Calu3 (cell line): ENCODE measurements at regions of chr15 and their contacts with region 1.

Region 1: GRCh38 chr15:38647683-38648082 is 83.1 kb upstream of the RASGRP1 start:
- DNase-seq: peak; percentile 28
- H3K4me3 Mint-ChIP-seq: no peak overlapping the region
- H3K27ac Mint-ChIP-seq: no peak overlapping the region
- H3K4me1 Mint-ChIP-seq: no peaks in the 10 kb centered on the region
- H3K27me3 Mint-ChIP-seq: no peaks in the 10 kb centered on the region
- CTCF ChIP-seq: no peak

Region 2: DNA sequence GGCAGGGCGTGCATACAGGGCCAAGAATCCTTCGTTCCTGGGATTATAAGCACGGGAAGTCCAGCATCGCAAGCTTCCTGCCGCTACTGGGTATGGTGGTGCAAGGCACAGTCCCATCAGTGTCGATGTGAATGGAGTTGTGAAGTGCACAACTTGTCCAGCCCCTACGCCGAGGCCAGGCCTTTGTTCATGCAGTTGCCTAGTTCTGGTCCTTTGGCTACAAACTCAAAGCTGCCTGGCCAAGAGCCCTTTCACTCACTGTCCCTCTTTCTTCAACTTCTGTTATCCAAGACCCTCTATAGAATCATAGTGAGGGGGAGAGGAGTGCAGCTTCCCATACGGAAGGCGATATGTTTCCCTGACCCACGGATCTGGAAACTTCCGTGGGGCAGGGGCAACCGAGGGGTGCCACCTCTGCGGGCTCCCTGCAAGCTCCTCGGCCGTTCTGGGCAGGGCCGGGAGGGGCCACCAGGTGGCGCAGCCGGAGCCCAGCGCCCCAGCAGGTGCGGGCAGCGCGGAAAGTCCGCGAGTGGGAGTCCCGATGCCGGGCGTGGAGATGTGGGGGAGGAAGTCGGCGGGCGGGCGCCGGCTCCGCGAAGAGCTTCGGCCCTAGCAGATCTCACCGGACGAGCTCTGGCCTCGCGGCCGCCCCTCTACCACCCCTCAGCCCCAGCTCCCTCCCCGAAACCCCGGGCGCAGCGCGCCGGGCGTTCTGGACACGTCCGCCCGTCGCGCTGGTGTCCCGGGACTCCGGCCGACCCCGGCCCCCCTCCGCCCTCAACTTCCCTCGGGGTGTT is 83.8 kb before region 1 on chr15:
- CTCF ChIA-PET with region 1: interaction called, 20 read pairs
- intact Hi-C with region 1: loop called (anchors 1 kb)
- DNase-seq: peak; percentile 82
- H3K4me3 Mint-ChIP-seq: peak overlapping the region; percentile 77
- H3K27ac Mint-ChIP-seq: no peak overlapping the region
- H3K4me1 Mint-ChIP-seq: peaks cover 9% of the 10 kb centered on the region
- H3K27me3 Mint-ChIP-seq: no peaks in the 10 kb centered on the region
- CTCF ChIP-seq: peak; percentile 63

Region 3: DNA sequence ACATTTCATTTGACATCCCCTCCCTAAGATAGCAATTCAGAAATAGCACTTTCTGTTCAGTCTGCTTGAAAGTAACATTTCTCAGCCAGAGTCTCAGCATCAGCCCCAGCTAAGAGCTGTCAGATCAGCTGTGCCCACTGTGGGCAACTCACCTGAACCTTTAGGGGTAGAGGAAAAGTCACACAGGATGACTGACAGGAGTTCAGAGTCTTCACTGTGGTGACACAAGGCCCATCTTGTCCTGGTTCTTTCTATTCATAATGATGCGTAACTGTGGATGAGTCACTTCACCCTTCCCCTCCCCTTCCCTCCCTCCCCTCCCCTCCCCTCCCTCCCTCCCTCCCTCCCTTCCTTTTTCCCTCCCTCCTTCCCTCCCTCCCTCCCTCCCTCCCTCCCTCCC is 13.1 kb after region 1 on chr15:
- CTCF ChIA-PET with region 1: no interaction called
- intact Hi-C with region 1: no loop called
- DNase-seq: no peak
- H3K4me3 Mint-ChIP-seq: no peak overlapping the region
- H3K27ac Mint-ChIP-seq: no peak overlapping the region
- H3K4me1 Mint-ChIP-seq: no peaks in the 10 kb centered on the region
- H3K27me3 Mint-ChIP-seq: no peaks in the 10 kb centered on the region
- CTCF ChIP-seq: no peak